Activated CD4-positive, alpha-beta memory T cell treated with anti-CD3 and anti-CD28 coated beads, Interleukin-2, amount 10 ng/mL, durations not matched to agents 7 days and 5 days (primary cell): ENCODE measurements at regions of chr3 and their contacts with region 1.

Region 1: GRCh38 chr3:13479581-13480339 is at the start of gene HDAC11:
- DNase-seq: peak; percentile 98
- H3K4me3 Mint-ChIP-seq: peak within 1 kb of the TSS; percentile 89
- H3K27ac Mint-ChIP-seq: peak within 1 kb of the TSS; percentile 82
- H3K4me1 Mint-ChIP-seq: peaks cover 11% of the 10 kb centered on the region
- H3K27me3 Mint-ChIP-seq: peaks cover 5% of the 10 kb centered on the region
- total RNA-seq, gene HDAC11: 2.0 to 3.6 TPM

Region 2: GRCh38 chr3:13364602-13365271 is 115.0 kb before region 1 on chr3:
- CTCF ChIA-PET with region 1: no interaction called
- POLR2A ChIA-PET with region 1: no interaction called
- DNase-seq: no peak
- H3K4me3 Mint-ChIP-seq: no peak overlapping the region
- H3K27ac Mint-ChIP-seq: no peak overlapping the region
- H3K4me1 Mint-ChIP-seq: peaks cover 4% of the 10 kb centered on the region
- H3K27me3 Mint-ChIP-seq: no peaks in the 10 kb centered on the region

Region 3: GRCh38 chr3:13419505-13420044 is 60.2 kb before region 1 on chr3:
- CTCF ChIA-PET with region 1: interaction called, 4 read pairs
- POLR2A ChIA-PET with region 1: interaction called, 14 read pairs
- DNase-seq: peak; percentile 60
- H3K4me3 Mint-ChIP-seq: peak overlapping the region; percentile 85
- H3K27ac Mint-ChIP-seq: peak overlapping the region; percentile 97
- H3K4me1 Mint-ChIP-seq: peaks cover 59% of the 10 kb centered on the region
- H3K27me3 Mint-ChIP-seq: no peaks in the 10 kb centered on the region

Region 4: DNA sequence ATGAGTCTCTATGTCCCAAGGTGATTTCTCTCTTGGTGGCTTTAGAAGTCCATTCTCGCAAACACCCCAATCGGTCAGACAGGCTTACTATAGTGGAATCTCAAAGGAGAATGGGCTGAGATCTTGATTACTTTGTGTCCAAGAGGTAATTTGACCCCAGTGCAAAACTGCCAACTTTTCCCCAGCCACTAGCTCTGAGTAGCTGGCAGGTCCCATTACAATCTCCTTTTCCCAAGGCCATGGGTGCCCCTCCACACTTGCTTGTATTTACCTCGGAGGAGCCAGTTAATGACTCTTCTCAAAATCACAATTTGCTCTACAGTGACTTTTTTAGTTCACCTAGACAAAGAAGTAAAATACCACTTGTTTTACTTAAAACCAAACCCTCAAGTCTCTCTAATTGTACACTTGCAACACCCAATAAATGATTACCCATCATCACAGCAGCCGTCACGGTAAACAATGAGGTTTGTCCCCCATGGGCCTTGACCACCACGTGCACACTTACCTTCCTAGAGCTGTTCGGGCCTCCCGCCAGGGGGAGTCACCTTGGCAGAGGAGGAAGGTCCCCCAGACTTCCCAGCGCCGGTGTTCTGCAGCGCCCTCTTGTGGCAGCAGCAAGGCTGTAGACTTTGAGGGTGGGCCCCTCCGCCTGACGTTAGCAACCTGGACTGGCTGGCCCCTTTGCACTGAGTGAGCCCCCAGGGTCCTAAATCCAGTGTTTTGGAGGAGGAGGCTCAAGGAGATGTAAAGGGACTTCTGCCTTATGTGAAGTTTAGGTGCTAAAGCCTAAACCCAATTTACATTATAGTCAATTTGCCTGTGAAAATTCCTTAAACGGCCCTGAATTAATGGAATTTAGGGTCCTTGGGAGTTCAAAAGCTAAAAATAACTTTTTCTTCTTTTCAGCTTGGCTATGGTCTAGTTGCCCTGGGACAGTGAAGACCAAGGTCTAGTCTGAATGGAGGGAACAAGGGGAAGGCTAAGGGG is 18.3 kb before region 1 on chr3:
- CTCF ChIA-PET with region 1: interaction called, 15 read pairs
- POLR2A ChIA-PET with region 1: interaction called, 5 read pairs
- DNase-seq: peak; percentile 81
- H3K4me3 Mint-ChIP-seq: no peak overlapping the region
- H3K27ac Mint-ChIP-seq: no peak overlapping the region
- H3K4me1 Mint-ChIP-seq: no peaks in the 10 kb centered on the region
- H3K27me3 Mint-ChIP-seq: peaks cover 12% of the 10 kb centered on the region

Region 5: GRCh38 chr3:13495921-13496723 is 16.4 kb after region 1 on chr3:
- CTCF ChIA-PET with region 1: interaction called, 23 read pairs
- POLR2A ChIA-PET with region 1: interaction called, 5 read pairs
- DNase-seq: peak; percentile 80
- H3K4me3 Mint-ChIP-seq: no peak overlapping the region
- H3K27ac Mint-ChIP-seq: no peak overlapping the region
- H3K4me1 Mint-ChIP-seq: peaks cover 19% of the 10 kb centered on the region
- H3K27me3 Mint-ChIP-seq: no peaks in the 10 kb centered on the region

Region 6: DNA sequence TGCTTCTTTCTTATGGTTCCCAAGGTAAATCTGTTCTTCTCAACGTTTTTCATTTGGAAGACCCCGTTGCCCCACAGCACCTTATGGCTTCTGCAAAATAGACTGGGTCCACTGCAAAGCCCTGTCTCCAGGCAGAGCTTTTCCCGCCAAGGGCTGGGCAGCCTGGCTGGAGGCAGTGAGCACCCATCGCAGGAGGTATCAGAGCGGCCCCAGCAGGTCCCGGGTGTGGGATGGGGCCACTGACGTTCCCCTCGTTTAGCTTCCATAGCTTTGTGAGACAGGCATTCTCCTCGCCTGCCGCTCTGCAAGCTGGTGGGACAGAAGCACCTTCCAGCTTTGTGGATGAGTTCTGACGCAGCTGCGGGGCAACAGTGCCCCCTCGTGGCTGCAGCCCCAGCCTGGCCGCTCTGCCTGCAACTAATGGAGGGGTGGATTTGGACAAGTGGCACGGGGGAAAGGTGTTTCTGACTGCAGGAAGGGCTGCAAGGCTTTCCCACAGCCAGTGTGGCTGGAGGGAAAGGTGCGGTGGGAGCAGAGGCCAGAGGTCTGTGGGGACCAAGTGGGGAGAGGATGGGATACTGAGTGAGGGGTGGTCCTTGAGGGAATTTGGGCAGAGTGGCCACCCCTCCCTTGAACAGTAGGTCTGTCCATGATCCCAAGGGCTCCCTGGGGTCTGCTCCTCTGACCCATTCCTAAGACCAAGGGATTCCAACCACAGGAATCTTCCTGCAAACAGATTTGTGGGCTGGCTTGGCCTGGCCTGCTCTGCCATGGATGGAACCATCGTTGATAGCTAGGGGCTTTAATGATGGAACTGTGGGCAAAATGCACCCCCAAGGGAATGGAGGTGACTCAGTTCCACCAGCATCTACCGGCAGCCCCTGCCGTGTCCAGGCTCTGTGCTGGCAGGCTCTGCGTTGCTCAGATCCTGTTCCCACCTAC is 168.6 kb after region 1 on chr3:
- CTCF ChIA-PET with region 1: interaction called, 41 read pairs
- POLR2A ChIA-PET with region 1: interaction called, 6 read pairs
- DNase-seq: peak; percentile 78
- H3K4me3 Mint-ChIP-seq: peak overlapping the region; percentile 33
- H3K27ac Mint-ChIP-seq: peak overlapping the region; percentile 66
- H3K4me1 Mint-ChIP-seq: peaks cover 52% of the 10 kb centered on the region
- H3K27me3 Mint-ChIP-seq: peaks cover 29% of the 10 kb centered on the region